GM18951 (cell line): ENCODE measurements at regions of chr6 and their contacts with region 1.

Region 1: DNA sequence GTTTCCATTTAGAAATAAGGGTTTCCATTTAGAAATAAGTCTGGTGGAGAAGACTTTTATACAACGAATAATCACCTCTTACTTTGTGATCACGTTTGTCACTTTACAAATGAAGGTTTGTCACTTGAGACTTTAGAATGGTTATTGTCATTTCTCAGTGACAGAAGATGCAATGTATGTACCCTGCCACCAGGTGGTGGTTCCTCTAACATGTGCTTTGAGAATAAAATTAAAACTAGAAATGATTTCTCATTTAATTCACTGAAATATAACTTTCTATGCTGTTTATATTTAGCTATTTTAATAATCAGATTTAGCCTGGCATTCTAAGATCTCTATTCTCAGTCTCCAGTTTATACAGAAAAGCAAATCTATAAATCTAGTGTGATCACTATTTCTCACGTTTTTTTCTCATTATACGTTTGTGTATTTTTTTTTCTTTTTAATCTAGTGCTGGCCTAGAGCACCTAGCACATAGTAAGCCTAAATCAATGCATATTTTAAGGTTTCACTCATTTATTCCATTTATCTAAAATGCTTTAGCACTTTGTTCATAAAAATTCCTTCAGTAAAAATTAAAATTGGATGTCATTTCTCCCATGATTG is 57.4 kb upstream of the TFAP2D start:
- POLR2A ChIP-seq: no peak

Region 2: DNA sequence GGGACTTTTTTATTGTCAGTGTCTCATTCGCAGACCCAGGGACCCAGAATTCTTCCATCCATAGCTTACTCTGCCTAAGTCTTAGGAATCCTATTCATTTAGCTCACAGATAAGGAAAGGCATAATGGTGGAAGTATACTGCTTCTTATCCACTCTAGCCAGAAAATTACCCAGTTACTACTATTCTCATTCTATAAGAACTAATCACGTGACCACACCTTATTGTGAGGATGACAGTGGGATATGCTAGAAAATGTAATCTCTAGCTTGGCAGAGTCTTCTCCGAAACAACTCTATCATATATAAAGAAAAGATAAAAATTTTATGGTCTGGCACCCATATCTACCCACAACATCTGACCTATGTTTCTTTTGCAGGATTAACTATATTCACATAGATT is 78.5 kb after region 1 on chr6:
- in situ Hi-C with region 1: no loop called
- POLR2A ChIP-seq: no peak

Region 3: DNA sequence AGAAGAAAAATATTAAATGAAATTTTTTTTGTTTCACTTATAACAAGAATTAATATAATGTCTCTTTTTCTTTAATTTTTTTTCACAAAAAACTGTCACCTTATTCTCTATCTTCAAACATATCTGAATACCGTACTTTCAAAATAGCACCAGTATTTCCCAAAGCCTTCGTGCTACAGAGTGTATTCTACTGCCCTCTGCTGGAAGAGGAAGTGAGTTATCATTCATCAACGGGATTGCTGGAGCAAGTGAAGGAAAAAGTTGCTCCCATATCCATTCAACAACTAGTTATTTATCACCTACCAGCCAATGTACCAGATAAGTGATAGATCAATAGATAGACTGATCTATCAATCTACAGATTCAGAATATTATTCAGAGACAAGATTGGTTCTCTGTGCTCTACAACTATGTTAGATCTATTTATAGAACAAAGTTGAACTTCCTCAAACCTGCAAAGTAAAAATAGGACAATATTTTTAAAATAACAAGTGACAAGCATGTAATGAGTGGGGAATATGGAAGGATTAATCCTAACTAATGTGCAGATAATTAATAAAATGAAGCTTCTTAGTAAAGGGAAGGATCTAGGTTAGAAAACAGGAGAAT is 136.1 kb after region 1 on chr6:
- in situ Hi-C with region 1: loop called (anchors 10 kb)
- POLR2A ChIP-seq: no peak

Region 4: GRCh38 chr6:50979126-50979525 is 323.2 kb after region 1 on chr6:
- in situ Hi-C with region 1: no loop called
- POLR2A ChIP-seq: no peak